Spleen (tissue), 13 donors: ENCODE measurements at regions of chr17 and their contacts with region 1.

Region 1: GRCh38 chr17:82655038-82655479 is 6.8 kb upstream of the WDR45B start:
- DNase-seq: no peak
- H3K4me3 ChIP-seq: no peak overlapping the region
- H3K27ac ChIP-seq: peak overlapping the region in 7 of 8 donors; percentile 5 to 65 (median 50)
- H3K4me1 ChIP-seq: peaks cover 0 to 16% (median 6%) of the 10 kb centered on the region in 6 donors
- H3K27me3 ChIP-seq: no peaks in the 10 kb centered on the region
- CTCF ChIP-seq: no peak
- POLR2A ChIP-seq: no peak

Region 2: DNA sequence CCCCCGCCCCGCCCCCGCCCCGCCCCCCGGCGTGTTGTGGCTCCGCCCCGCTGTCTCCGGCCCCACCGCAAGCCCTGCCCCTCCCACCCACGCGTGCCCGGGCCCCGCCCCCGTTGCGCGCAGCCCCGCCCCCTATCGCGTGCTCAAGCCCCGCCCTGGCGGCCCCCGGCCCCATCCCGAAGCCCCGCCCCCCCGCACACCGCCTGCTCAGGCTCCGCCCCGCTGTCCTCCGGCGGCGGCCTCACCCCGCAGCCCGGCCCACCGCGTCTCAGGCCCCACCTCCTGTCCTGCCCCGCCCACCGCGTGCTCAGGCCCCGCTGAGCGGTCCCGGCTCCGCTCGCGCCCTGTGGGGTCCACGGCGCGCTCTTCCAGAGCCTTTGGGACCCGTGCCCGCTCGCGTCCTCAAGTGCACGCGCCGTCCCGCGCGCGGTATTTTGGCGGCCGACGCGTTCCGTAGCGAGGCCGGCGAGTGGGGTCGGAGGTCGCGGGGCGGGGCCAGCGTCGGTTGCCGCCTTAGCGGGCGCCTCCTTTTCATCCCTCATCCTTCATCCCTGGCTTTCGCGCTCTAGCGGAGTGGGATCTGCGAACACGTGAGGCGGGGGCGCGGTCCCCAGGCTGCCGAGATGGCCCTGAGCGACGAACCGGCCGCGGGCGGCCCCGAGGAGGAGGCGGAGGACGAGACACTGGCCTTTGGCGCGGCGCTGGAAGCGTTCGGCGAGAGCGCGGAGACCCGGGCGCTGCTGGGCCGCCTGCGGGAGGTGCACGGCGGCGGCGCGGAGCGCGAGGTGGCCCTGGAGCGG is 96.7 kb after region 1 on chr17 and contains the start of gene TBCD:
- intact Hi-C with region 1: loop called (anchors 10 kb)
- DNase-seq: peak; percentile 95
- H3K4me3 ChIP-seq: peak within 1 kb of the TSS; percentile 97 to 100 (median 99)
- H3K27ac ChIP-seq: peak within 1 kb of the TSS; percentile 51 to 88 (median 84)
- H3K4me1 ChIP-seq: peaks cover 10 to 31% (median 20%) of the 10 kb centered on the region in 6 donors
- H3K27me3 ChIP-seq: no peaks in the 10 kb centered on the region
- CTCF ChIP-seq: no peak
- POLR2A ChIP-seq: no peak
- total RNA-seq, gene TBCD: 55.6 to 149 (median 84.5) TPM